Activated naive CD4-positive, alpha-beta T cell treated with anti-CD3 and anti-CD28 coated beads for 36 hours (primary cell): ENCODE measurements at regions of chr2 and their contacts with region 1.

Region 1: GRCh38 chr2:159516241-159516766 is 100.0 kb downstream of the BAZ2B start:
- DNase-seq: peak; percentile 23
- H3K4me3 Mint-ChIP-seq: peak overlapping the region; percentile 66
- H3K27ac Mint-ChIP-seq: peak overlapping the region; percentile 54
- H3K4me1 Mint-ChIP-seq: peaks cover 17% of the 10 kb centered on the region
- H3K27me3 Mint-ChIP-seq: no peaks in the 10 kb centered on the region

Region 2: GRCh38 chr2:159595410-159596046 is 79.2 kb after region 1 on chr2:
- CTCF ChIA-PET with region 1: no interaction called
- intact Hi-C with region 1: no loop called
- DNase-seq: no peak
- H3K4me3 Mint-ChIP-seq: no peak overlapping the region
- H3K27ac Mint-ChIP-seq: no peak overlapping the region
- H3K4me1 Mint-ChIP-seq: peaks cover 2% of the 10 kb centered on the region
- H3K27me3 Mint-ChIP-seq: no peaks in the 10 kb centered on the region

Region 3: GRCh38 chr2:159615140-159615951 is 99.0 kb after region 1 on chr2:
- CTCF ChIA-PET with region 1: no interaction called
- intact Hi-C with region 1: loop called (anchors 2 kb)
- DNase-seq: peak; percentile 53
- H3K4me3 Mint-ChIP-seq: peak overlapping the region; percentile 72
- H3K27ac Mint-ChIP-seq: no peak overlapping the region
- H3K4me1 Mint-ChIP-seq: peaks cover 6% of the 10 kb centered on the region
- H3K27me3 Mint-ChIP-seq: peaks cover 15% of the 10 kb centered on the region

Region 4: DNA sequence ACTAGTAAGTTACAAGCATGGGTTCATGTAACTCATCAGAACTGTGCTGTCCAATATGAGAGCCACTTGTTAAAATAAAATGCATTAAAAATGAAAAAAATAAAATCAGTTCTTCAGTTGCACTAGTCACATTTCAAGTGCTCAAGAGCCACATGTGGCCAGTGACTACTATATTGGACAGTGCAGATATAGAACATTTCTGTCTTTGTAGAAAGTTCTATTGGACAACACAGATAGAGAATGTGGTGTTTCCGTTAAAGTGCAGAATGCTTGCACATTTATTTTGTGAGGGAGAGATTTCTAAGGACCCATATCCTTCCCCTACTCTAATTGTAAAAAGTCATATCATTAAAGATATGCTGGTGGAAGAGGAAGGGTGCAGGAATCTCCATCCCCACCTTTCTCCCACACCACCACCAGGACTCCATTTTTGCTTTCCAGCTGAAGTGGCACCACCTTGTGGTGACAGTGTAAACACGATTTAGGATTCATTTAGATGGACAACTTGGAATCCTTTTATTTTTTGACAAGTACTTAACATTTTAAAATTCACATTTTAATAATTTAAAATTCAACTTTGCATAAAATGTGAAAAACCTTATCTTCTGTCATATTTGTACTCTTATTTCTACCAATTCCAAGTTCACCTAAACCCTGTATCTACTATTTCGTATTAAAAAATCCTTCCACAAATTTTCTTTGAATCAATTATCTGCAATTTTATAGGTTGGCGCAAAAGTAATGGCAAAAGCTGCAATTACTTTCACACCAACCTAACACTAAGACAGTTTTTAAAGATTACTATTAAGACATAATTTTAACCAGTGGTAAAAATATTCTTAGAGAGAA is 291.1 kb after region 1 on chr2:
- CTCF ChIA-PET with region 1: no interaction called
- intact Hi-C with region 1: loop called (anchors 2 kb)
- DNase-seq: peak; percentile 43
- H3K4me3 Mint-ChIP-seq: no peak overlapping the region
- H3K27ac Mint-ChIP-seq: no peak overlapping the region
- H3K4me1 Mint-ChIP-seq: peaks cover 6% of the 10 kb centered on the region
- H3K27me3 Mint-ChIP-seq: no peaks in the 10 kb centered on the region

Region 5: GRCh38 chr2:159960383-159960782 is 444.1 kb after region 1 on chr2:
- CTCF ChIA-PET with region 1: no interaction called
- intact Hi-C with region 1: loop called (anchors 1 kb)
- DNase-seq: no peak
- H3K4me3 Mint-ChIP-seq: no peak overlapping the region
- H3K27ac Mint-ChIP-seq: no peak overlapping the region
- H3K4me1 Mint-ChIP-seq: peaks cover 18% of the 10 kb centered on the region
- H3K27me3 Mint-ChIP-seq: peaks cover 4% of the 10 kb centered on the region